Thyroid gland (tissue), 4 donors: ENCODE measurements at regions of chr11 and their contacts with region 1.

Region 1: GRCh38 chr11:82698576-82699352 is 34.9 kb downstream of the FAM181B start:
- DNase-seq: no peak
- H3K4me3 ChIP-seq: no peak overlapping the region
- H3K27ac ChIP-seq: no peak overlapping the region
- H3K4me1 ChIP-seq: no peaks in the 10 kb centered on the region
- H3K27me3 ChIP-seq: no peaks in the 10 kb centered on the region
- CTCF ChIP-seq: no peak
- POLR2A ChIP-seq: no peak

Region 2: GRCh38 chr11:81644239-81644840 is 1054.4 kb before region 1 on chr11:
- intact Hi-C with region 1: loop called (anchors 10 kb)
- DNase-seq: peak in 1 of 2 donors; percentile 2
- H3K4me3 ChIP-seq: no peak overlapping the region
- H3K27ac ChIP-seq: no peak overlapping the region
- H3K4me1 ChIP-seq: no peaks in the 10 kb centered on the region
- H3K27me3 ChIP-seq: no peaks in the 10 kb centered on the region
- CTCF ChIP-seq: peak in 5 of 6 experiments; percentile 28 to 53 (median 44)
- POLR2A ChIP-seq: no peak